ENCODE measurements at regions of chr19 and their contacts with region 1.

Region 1: GRCh38 chr19:6551607-6552450 is 21.0 kb downstream of the TNFSF9 start:
- DNase-seq: no peak
- ATAC-seq: peak; percentile 91
- H3K4me3 ChIP-seq: no peak overlapping the region; the same call in 1 of the 2 replicates
- H3K27ac ChIP-seq: peak overlapping the region; percentile 72
- H3K4me1 ChIP-seq: peaks cover 35% of the 10 kb centered on the region
- H3K27me3 ChIP-seq: no peaks in the 10 kb centered on the region
- CTCF ChIP-seq: peak; percentile 23 to 60 (median 47)
- EP300 ChIP-seq: peak; percentile 25 to 36; a peak in 1 of 4 replicates
- POLR2A ChIP-seq: peak; percentile 63
- RAD21 ChIP-seq: peak; percentile 40

Region 2: DNA sequence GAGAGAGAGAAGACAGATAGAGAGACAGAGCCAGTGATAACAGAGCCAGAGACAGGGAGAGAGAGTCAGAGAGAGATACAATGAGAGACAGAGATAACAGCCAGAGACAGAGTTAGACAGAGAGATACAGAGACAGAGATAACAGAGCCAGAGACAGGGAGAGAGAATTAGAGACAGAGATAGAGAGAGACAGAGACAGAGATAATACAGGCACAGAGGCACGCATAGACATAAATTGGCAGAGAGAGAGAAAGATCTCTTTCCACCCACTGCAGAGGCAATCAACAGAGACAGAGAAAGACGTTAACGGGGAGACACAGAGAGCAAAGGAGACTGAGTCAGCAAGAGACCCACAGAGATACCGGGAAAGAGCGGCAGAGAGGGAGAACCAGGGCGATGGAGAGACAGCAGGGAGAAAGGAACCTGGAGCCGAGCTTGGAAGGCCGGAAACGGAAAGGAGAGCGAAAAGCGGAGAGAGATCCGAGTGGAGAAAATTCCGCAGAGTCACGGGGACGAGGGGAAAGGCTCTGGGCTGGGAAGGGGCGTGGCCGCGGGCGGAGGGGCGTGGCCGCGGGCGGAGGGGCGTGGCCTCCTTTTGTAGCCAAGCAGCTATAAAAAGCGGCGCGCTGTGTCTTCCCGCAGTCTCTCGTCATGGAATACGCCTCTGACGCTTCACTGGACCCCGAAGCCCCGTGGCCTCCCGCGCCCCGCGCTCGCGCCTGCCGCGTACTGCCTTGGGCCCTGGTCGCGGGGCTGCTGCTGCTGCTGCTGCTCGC is 21.3 kb before region 1 on chr19 and contains the start of gene TNFSF9:
- CTCF ChIA-PET with region 1: interaction called, 3 read pairs
- POLR2A ChIA-PET with region 1: interaction called, 10 read pairs
- RAD21 ChIA-PET with region 1: interaction called, 10 read pairs
- SMC1A ChIA-PET with region 1: interaction called, 4 read pairs
- in situ Hi-C with region 1: no loop called
- intact Hi-C with region 1: no loop called
- DNase-seq: no peak
- ATAC-seq: peak; percentile 55
- H3K4me3 ChIP-seq: peak within 1 kb of the TSS; percentile 99
- H3K27ac ChIP-seq: peak within 1 kb of the TSS; percentile 83
- H3K4me1 ChIP-seq: peaks cover 34% of the 10 kb centered on the region
- H3K27me3 ChIP-seq: no peaks in the 10 kb centered on the region
- CTCF ChIP-seq: no peak
- EP300 ChIP-seq: no peak
- POLR2A ChIP-seq: peak; percentile 98
- RAD21 ChIP-seq: no peak
- polyA plus RNA-seq, gene TNFSF9: 6.2 to 12.8 TPM

Region 3: GRCh38 chr19:6540918-6541689 is 10.7 kb before region 1 on chr19:
- CTCF ChIA-PET with region 1: interaction called, 8 read pairs
- POLR2A ChIA-PET with region 1: interaction called, 15 read pairs
- RAD21 ChIA-PET with region 1: interaction called, 9 read pairs
- SMC1A ChIA-PET with region 1: interaction called, 7 read pairs
- in situ Hi-C with region 1: no loop called
- intact Hi-C with region 1: no loop called
- DNase-seq: no peak
- ATAC-seq: no peak
- H3K4me3 ChIP-seq: no peak overlapping the region
- H3K27ac ChIP-seq: no peak overlapping the region
- H3K4me1 ChIP-seq: peaks cover 40% of the 10 kb centered on the region
- H3K27me3 ChIP-seq: no peaks in the 10 kb centered on the region
- CTCF ChIP-seq: no peak
- EP300 ChIP-seq: no peak
- POLR2A ChIP-seq: no peak; the same call in 1 of the 2 replicates
- RAD21 ChIP-seq: no peak

Region 4: DNA sequence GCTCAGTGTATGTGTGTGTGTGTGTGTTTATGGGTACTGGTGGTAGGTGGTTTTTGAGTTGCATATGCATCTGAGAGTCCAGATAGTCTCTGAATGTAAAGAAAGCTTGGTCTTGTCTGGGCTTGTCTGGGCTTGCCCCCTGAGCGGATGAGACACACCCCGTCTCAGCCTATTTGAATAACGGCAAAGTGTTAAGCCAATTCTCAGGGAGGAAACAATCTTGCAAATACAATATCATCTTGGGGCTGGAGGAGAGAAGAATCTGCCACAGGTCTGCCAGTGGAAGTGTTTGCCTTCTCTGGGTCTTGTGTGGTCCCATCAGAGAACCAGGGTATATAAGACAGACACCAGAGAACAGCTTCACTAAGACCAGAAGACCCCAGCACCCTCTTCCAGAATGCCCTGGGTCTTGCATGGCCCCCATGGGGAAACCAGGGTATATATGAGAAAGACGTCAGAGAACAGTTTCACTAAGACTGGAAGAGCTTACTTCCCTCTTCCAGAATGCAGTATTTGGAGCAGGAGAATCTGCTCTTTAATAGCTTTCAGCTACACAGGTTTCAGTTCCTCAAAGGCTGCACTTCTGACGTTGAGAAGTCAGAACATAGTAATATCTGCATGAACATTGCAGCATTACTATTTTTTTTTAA is 25.8 kb after region 1 on chr19:
- CTCF ChIA-PET with region 1: interaction called, 4 read pairs
- POLR2A ChIA-PET with region 1: interaction called, 5 read pairs
- RAD21 ChIA-PET with region 1: interaction called, 11 read pairs
- SMC1A ChIA-PET with region 1: interaction called, 10 read pairs
- in situ Hi-C with region 1: no loop called
- intact Hi-C with region 1: loop called (anchors 1 kb)
- DNase-seq: peak; percentile 96
- ATAC-seq: peak; percentile 89
- H3K4me3 ChIP-seq: peak overlapping the region; percentile 26; the same call in 1 of the 2 replicates
- H3K27ac ChIP-seq: peak overlapping the region; percentile 99
- H3K4me1 ChIP-seq: peaks cover 50% of the 10 kb centered on the region
- H3K27me3 ChIP-seq: no peaks in the 10 kb centered on the region
- CTCF ChIP-seq: no peak
- EP300 ChIP-seq: peak; percentile 81 to 98
- POLR2A ChIP-seq: peak; percentile 69
- RAD21 ChIP-seq: no peak

Region 5: DNA sequence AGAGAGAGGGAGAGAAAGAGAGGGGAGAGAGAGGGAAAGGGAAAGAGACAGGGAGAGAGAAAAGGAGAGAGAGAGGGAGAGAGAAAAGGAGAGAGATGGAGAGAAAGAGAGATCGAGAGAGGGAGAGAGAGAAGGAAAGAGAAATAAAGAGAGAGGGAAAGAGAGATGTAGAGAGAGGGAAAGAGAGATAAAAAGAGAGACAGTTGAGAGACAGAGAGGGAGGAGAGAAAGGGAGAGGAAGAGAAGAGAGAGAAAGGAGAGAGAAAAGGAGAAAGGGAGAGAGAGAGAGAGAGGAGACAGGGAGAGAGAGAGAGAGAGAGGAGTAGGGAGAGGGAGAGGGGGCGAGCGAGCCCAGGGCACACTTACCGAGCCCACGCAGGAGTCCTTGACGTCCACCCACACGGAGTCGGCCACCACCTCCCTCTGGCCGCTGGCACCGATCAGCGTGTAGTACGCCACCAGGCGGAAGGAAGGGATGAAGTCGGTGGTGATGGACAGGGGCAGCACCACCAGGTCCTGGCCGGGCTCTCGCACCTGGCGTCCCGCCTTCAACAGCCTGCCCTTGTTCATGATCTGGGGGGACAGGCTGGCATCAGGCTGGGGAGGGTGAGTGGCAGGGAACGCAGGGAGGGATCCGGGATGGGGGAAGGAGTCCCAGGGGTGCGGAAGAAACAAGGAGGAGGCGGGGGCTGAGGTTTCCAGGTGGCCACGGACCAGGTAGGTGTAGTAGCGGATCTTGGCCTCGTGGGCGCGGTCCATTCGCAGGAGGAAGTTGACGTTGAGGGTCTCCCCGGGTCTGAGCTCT is 158.6 kb after region 1 on chr19:
- CTCF ChIA-PET with region 1: no interaction called
- POLR2A ChIA-PET with region 1: no interaction called
- RAD21 ChIA-PET with region 1: no interaction called
- SMC1A ChIA-PET with region 1: no interaction called
- in situ Hi-C with region 1: no loop called
- intact Hi-C with region 1: no loop called
- DNase-seq: no peak
- ATAC-seq: peak; percentile 77
- H3K4me3 ChIP-seq: no peak overlapping the region
- H3K27ac ChIP-seq: no peak overlapping the region
- H3K4me1 ChIP-seq: no peaks in the 10 kb centered on the region
- H3K27me3 ChIP-seq: no peaks in the 10 kb centered on the region; a peak in 2 of 4 replicates
- CTCF ChIP-seq: peak in 2 of 3 experiments; percentile 2 to 30; a peak in 2 of 6 replicates
- EP300 ChIP-seq: no peak
- POLR2A ChIP-seq: no peak
- RAD21 ChIP-seq: no peak

Measured in GM12878 (cell line).